Left cardiac atrium (tissue), 4 donors: ENCODE measurements at regions of chr11 and their contacts with region 1.

Region 1: DNA sequence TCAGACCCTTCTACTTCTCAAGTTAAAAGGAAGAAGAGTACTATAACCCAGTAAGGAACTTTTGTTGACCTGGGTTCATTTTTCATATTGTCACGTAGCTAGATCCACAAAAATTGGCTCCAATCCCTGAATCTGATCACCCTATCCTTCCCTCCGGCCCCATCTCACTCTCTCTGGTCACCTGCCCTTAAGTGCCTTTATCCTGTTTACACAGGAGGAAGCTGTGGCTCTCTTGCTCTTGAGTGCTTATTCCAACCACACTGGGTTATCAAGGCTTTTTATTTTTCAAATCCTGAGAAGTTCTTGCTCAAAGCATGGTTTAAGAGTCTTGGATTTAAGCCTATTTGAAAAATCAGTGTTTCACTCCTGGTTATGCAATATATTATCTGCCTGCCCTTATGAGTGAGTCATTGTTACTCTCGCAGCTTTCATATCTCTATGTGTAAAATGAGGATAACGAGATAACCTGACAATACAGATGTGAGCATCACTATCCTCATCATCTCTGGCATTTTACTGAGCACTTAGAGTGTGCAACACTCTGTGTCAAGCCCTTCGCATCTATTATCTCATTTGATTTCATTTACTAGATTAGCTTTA is 293.9 kb downstream of the GUCY1A2 start:
- DNase-seq: no peak
- ATAC-seq: peak in 1 of 2 donors; percentile 73

Region 2: GRCh38 chr11:107017433-107018227 is 293.2 kb after region 1 on chr11:
- intact Hi-C with region 1: loop called in 1 of 2 experiments (anchors 5 kb)
- DNase-seq: peak; percentile 32
- ATAC-seq: peak; percentile 74 to 84

Region 3: DNA sequence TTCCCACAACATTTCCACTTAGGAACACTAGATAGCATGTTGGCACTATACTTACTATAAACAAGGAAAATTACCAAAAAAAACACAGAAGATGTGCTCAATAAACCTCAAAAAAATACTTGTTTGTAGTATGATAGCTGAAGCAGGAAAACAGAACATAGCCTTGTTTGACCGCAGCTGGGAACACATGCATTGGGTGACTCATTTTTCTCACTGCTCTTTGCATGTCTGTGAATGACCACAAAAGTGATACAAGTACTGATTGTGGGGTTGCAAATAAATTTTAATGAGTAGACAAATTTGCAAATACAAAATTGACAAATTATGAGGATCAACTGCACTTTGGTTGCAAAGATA is 316.7 kb after region 1 on chr11:
- intact Hi-C with region 1: loop called in 1 of 2 experiments (anchors 2 kb)
- DNase-seq: no peak
- ATAC-seq: no peak